GM10248 (cell line): ENCODE measurements at regions of chr15 and their contacts with region 1.

Region 1: GRCh38 chr15:43903864-43904290 is 77.1 kb downstream of the WDR76 start:
- DNase-seq: peak; percentile 80
- CTCF ChIP-seq: peak; percentile 70

Region 2: DNA sequence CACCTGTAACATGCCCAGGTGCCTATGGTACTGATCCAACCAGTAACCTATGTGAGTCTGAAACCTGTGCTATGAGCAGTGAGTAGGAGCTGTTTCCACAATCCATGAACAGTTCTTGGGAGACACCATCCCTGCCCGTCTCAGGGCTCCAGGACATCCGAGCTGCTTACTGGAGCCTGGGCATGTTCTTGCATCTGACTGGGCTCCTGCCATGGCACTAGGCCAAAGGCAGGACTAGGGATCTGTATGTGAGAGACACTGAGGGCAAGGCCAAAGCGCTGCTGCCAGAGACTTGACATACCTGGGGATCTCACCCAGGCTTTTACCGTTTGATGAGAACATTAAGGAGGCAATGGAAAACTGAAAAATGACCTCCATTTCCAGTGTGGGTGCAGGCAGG is 17.3 kb before region 1 on chr15:
- CTCF ChIA-PET with region 1: interaction called, 63 read pairs
- POLR2A ChIA-PET with region 1: no interaction called
- DNase-seq: no peak
- CTCF ChIP-seq: no peak

Region 3: GRCh38 chr15:43918717-43919116 is 14.8 kb after region 1 on chr15:
- CTCF ChIA-PET with region 1: interaction called, 13 read pairs
- POLR2A ChIA-PET with region 1: no interaction called
- DNase-seq: no peak
- CTCF ChIP-seq: no peak

Region 4: GRCh38 chr15:43977072-43977884 is 73.4 kb after region 1 on chr15:
- CTCF ChIA-PET with region 1: no interaction called
- POLR2A ChIA-PET with region 1: no interaction called
- DNase-seq: peak; percentile 30
- CTCF ChIP-seq: no peak

Region 5: GRCh38 chr15:44066316-44066740 is 162.5 kb after region 1 on chr15:
- CTCF ChIA-PET with region 1: interaction called, 108 read pairs
- POLR2A ChIA-PET with region 1: no interaction called
- DNase-seq: peak; percentile 52
- CTCF ChIP-seq: peak; percentile 69

Region 6: GRCh38 chr15:44219073-44219472 is 315.2 kb after region 1 on chr15:
- CTCF ChIA-PET with region 1: interaction called, 26 read pairs
- POLR2A ChIA-PET with region 1: no interaction called
- DNase-seq: no peak
- CTCF ChIP-seq: no peak

Region 7: DNA sequence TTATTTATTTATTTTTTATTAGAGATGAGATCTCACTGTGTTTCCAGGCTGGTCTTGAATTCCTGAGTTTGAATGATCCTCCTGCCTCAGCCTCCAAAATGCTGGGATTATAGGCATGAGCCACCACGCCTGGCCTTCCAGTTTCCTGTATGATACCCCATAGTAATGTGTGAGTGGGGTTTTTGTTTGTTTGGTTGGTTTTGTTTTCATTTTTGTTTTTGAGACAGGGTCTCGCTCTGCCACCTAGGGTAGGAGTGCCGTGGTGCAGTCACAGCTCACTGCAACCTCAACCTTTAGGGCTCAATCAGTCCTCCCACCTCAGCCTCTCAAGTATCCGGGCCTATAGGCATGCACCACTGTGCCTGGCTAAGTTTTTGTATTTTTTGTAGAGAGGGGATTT is 415.5 kb after region 1 on chr15:
- CTCF ChIA-PET with region 1: interaction called, 18 read pairs
- POLR2A ChIA-PET with region 1: no interaction called
- DNase-seq: peak; percentile 49
- CTCF ChIP-seq: peak; percentile 76